CD4-positive, alpha-beta T cell (primary cell): ENCODE measurements at regions of chr14 and their contacts with region 1.

Region 1: DNA sequence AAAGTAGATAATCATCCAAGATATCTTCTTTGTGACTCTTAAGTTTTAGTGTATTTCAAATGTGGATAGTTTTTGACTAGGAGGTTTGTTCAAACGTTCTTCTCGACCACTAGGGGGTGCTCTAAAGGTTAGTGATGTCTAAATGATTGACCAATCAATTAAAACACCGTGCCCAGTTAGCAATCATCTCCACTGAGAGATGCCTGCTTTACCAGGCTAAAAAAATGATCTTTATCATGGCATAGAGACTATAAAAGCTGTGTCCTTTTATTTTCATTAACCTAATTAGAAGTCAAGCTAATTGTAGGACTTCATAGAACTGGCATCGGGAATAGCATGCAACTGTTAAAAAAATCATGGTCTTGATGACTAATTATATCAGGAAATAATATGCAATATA is 153.9 kb downstream of the PRKCH start:
- DNase-seq: peak in 3 of 14 experiments; percentile 71 to 80 (median 76)
- ATAC-seq: no peak
- H3K4me3 ChIP-seq: no peak overlapping the region
- H3K4me3 Mint-ChIP-seq: peak overlapping the region; percentile 5
- H3K27ac ChIP-seq: peak overlapping the region; percentile 95 to 97
- H3K27ac Mint-ChIP-seq: peak overlapping the region; percentile 84
- H3K4me1 ChIP-seq: peaks cover 86% of the 10 kb centered on the region
- H3K4me1 Mint-ChIP-seq: peaks cover 96% of the 10 kb centered on the region
- H3K27me3 ChIP-seq: no peaks in the 10 kb centered on the region
- H3K27me3 Mint-ChIP-seq: no peaks in the 10 kb centered on the region
- CTCF ChIP-seq: peak; percentile 71

Region 2: DNA sequence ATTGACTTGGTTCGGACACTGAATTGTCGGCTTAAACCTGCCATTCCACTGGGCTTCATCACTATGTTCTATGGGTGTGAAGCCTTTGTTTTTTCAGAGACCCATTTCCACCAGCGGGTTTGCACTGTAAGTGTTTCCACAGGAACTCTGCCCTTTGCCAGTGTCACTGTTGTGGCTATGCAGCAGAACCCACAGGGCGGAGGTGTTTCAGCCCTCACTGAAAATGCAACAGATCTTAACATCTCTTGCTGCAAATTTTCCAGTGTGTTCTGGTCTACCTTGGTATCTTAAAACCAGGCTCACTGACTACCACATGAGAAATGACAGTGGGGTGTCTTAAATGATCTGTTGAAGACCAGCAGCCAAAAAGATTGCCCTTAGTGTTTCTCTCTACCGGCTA is 132.8 kb before region 1 on chr14:
- CTCF ChIA-PET with region 1: no interaction called
- POLR2A ChIA-PET with region 1: interaction called, 17 read pairs
- intact Hi-C with region 1: no loop called
- DNase-seq: peak; percentile 60 to 93 (median 76)
- ATAC-seq: peak; percentile 57
- H3K4me3 ChIP-seq: peak overlapping the region; percentile 23
- H3K4me3 Mint-ChIP-seq: peak overlapping the region; percentile 87
- H3K27ac ChIP-seq: peak overlapping the region; percentile 79 to 88
- H3K27ac Mint-ChIP-seq: peak overlapping the region; percentile 99
- H3K4me1 ChIP-seq: peaks cover 90% of the 10 kb centered on the region
- H3K4me1 Mint-ChIP-seq: peaks cover 92% of the 10 kb centered on the region
- H3K27me3 ChIP-seq: no peaks in the 10 kb centered on the region
- H3K27me3 Mint-ChIP-seq: no peaks in the 10 kb centered on the region
- CTCF ChIP-seq: no peak

Region 3: DNA sequence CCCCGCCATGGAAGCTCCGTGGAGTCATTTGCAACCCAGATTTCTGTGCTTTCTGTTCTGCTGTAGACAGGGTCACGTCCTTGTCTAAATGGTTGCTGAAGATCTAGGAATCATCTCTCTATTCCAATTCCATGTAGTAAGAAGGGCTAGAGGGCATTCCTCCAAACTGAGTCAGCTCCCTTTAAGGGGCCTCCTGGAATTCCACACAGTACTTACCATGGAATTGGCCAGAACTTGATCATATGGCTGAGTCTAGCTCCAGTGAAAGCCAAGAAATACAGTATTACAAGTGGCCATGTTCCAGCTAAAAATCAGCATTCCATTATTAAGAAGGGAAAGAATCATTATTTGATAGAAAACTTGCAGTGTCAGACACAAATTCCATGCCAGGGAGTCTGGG is 17.9 kb after region 1 on chr14:
- CTCF ChIA-PET with region 1: interaction called, 7 read pairs
- POLR2A ChIA-PET with region 1: interaction called, 28 read pairs
- intact Hi-C with region 1: no loop called
- DNase-seq: no peak
- ATAC-seq: no peak
- H3K4me3 ChIP-seq: no peak overlapping the region
- H3K4me3 Mint-ChIP-seq: no peak overlapping the region
- H3K27ac ChIP-seq: no peak overlapping the region
- H3K27ac Mint-ChIP-seq: no peak overlapping the region
- H3K4me1 ChIP-seq: peaks cover 54% of the 10 kb centered on the region
- H3K4me1 Mint-ChIP-seq: peaks cover 21% of the 10 kb centered on the region
- H3K27me3 ChIP-seq: no peaks in the 10 kb centered on the region
- H3K27me3 Mint-ChIP-seq: no peaks in the 10 kb centered on the region
- CTCF ChIP-seq: no peak

Region 4: GRCh38 chr14:61568572-61569131 is 93.3 kb after region 1 on chr14:
- CTCF ChIA-PET with region 1: no interaction called
- POLR2A ChIA-PET with region 1: interaction called, 4 read pairs
- intact Hi-C with region 1: loop called in 1 of 2 experiments (anchors 5 kb)
- DNase-seq: peak; percentile 24 to 79 (median 54)
- ATAC-seq: peak; percentile 83
- H3K4me3 ChIP-seq: peak overlapping the region; percentile 45
- H3K4me3 Mint-ChIP-seq: peak overlapping the region; percentile 76
- H3K27ac ChIP-seq: no peak overlapping the region
- H3K27ac Mint-ChIP-seq: peak overlapping the region; percentile 83
- H3K4me1 ChIP-seq: peaks cover 39% of the 10 kb centered on the region
- H3K4me1 Mint-ChIP-seq: peaks cover 59% of the 10 kb centered on the region
- H3K27me3 ChIP-seq: no peaks in the 10 kb centered on the region
- H3K27me3 Mint-ChIP-seq: no peaks in the 10 kb centered on the region
- CTCF ChIP-seq: no peak

Region 5: DNA sequence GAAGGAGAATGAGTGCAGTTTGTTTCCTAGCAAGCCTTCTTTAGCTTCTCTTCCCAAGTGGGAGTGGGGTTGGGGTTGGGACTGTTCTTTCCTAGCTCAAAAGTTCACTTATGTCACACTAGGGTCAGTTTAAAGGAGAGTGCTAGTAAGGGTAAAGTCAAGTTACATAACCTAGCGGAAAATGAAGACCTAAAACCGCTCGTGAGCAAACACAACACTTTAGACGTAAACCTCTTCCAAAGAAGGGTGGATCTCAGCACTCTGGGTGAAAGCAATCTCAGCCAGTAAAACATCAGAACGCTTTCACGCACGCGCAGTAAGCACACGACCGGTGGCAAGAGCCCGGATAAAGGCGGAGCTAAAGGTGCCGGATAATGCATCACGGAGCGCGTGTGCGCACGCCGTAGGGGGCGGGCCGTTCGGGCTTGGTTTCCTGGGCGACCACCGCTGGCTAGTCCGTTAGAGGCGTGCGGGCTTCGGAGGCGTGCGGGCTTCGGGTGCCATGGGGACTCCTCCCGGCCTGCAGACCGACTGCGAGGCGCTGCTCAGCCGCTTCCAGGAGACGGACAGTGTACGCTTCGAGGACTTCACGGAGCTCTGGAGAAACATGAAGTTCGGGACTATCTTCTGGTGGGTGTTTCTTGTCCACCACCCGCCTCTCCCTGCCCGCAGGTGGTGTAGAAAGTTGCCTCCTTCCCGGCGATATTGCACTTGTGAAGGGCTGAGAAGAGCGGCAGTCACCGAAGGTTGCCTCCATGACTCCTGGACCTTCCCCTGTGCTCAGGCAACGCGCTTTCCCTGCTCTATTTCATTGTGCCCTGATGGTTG is 286.9 kb after region 1 on chr14 and contains the start of gene SNAPC1:
- CTCF ChIA-PET with region 1: no interaction called
- POLR2A ChIA-PET with region 1: interaction called, 10 read pairs
- intact Hi-C with region 1: no loop called
- DNase-seq: peak; percentile 95 to 100 (median 97)
- ATAC-seq: peak; percentile 90
- H3K4me3 ChIP-seq: peak within 1 kb of the TSS; percentile 68
- H3K4me3 Mint-ChIP-seq: peak within 1 kb of the TSS; percentile 93
- H3K27ac ChIP-seq: peak within 1 kb of the TSS; percentile 96 to 99
- H3K27ac Mint-ChIP-seq: peak within 1 kb of the TSS; percentile 99
- H3K4me1 ChIP-seq: peaks cover 23% of the 10 kb centered on the region
- H3K4me1 Mint-ChIP-seq: peaks cover 54% of the 10 kb centered on the region
- H3K27me3 ChIP-seq: no peaks in the 10 kb centered on the region
- H3K27me3 Mint-ChIP-seq: no peaks in the 10 kb centered on the region
- CTCF ChIP-seq: no peak
- total RNA-seq, gene SNAPC1: 4.8 to 5.0 TPM